ENCODE measurements at regions of chr19 and their contacts with region 1.

Region 1: DNA sequence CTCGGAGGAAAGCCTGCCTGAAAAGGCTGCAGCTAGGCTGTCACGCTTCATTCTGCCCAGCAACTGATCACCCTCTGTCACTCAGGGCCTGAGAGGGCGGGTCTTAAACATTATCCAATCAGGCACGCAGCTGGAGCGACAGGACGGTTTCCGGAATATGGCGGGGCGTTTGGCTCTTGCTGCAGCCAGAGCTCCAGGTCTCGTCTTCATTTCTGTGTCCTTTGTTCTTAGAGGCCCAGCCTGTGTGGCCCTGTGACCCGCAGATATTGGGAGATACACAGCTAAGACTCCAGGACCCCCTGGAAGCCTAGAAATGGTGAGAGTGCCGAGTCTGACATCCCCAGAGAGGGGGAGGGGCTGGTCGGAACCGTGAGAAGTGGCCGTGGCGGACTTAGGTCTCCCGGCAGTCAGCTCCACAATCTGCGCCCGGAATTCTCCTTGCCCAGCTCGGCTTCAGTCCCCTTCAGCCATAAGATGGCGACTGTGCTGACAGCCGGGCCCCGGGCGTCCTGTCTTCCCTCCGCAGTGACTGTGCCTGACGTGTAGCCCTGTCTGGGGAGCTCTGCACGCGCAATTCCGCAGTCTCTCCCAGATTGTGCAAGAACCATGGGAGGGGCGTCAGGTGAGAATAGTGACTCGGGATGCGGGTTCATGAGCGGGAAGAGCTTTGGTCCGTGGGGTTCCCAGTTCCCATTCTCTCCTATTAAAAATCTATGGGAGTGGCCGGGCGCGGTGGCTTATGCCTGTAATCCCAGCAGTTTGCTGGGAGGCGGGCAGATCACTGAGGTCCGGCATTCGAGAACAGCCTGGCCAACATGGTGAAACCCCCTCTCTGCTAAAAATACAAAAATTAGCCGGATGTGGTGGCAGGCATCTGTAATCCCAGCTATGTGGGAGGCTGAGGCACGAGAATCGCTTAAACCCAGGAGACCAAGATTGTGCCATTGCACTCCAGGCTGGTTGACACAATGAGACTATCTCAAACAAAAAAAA is at the start of gene ZNF429:
- DNase-seq: peak; percentile 85 to 88
- H3K4me3 ChIP-seq: peak within 1 kb of the TSS; percentile 78 to 95 (median 92)
- H3K27ac ChIP-seq: peak within 1 kb of the TSS; percentile 84
- H3K4me1 ChIP-seq: no peaks in the 10 kb centered on the region
- H3K27me3 ChIP-seq: no peaks in the 10 kb centered on the region
- CTCF ChIP-seq: peak in 1 of 3 experiments; percentile 11; a peak in 2 of 4 replicates
- EP300 ChIP-seq: no peak
- POLR2A ChIP-seq: peak; percentile 63 to 83
- RAD21 ChIP-seq: peak in 1 of 2 experiments; percentile 20; a peak in 3 of 4 replicates
- total RNA-seq, gene ZNF429: 15.0 and 15.4 TPM in 2 replicates

Region 2: GRCh38 chr19:21474671-21475181 is 31.0 kb before region 1 on chr19:
- CTCF ChIA-PET with region 1: no interaction called
- POLR2A ChIA-PET with region 1: interaction called, 10 read pairs
- DNase-seq: peak in 1 of 2 experiments; percentile 84
- H3K4me3 ChIP-seq: peak overlapping the region; percentile 35 to 69 (median 60)
- H3K27ac ChIP-seq: peak overlapping the region; percentile 94
- H3K4me1 ChIP-seq: no peaks in the 10 kb centered on the region; a peak in 1 of 7 replicates
- H3K27me3 ChIP-seq: no peaks in the 10 kb centered on the region; a peak in 1 of 7 replicates
- CTCF ChIP-seq: no peak
- EP300 ChIP-seq: no peak
- POLR2A ChIP-seq: peak; percentile 80 to 97
- RAD21 ChIP-seq: no peak

Region 3: DNA sequence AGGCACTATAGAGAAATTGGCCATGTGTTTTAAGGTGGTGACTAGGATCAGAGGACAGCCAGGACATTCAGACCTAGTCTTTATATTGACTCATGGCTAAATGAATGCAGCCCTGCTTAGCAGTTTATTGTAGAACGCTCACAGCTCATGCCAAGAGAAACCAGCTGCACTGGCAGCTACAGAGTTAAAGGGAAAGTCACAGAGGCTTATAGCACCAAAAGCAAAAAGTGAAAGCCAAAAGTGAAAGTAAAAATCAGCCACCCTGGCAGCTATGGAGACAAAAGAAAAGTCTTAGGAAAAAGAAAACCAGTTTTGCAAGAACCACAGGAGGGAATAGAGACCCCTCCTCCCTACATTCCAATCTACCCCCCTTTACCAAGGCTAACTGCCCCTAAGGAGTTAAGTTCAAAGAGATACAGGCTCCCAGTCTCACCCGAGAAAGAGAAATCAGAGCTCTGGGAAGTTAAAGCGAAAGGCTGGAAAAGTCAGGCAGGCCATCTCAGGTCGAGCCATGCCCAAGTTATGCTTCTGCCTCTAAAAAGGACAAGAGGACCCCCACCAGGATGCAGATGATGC is 98.7 kb after region 1 on chr19:
- CTCF ChIA-PET with region 1: no interaction called
- POLR2A ChIA-PET with region 1: interaction called, 12 read pairs
- DNase-seq: peak in 1 of 2 experiments; percentile 52
- H3K4me3 ChIP-seq: peak overlapping the region in 3 of 4 experiments; percentile 32 to 50 (median 39); a peak in 5 of 8 replicates
- H3K27ac ChIP-seq: peak overlapping the region; percentile 68
- H3K4me1 ChIP-seq: peaks cover 17 to 28% (median 23%) of the 10 kb centered on the region in 4 experiments
- H3K27me3 ChIP-seq: no peaks in the 10 kb centered on the region
- CTCF ChIP-seq: no peak
- EP300 ChIP-seq: peak in 1 of 2 experiments; percentile 80; a peak in 1 of 3 replicates
- POLR2A ChIP-seq: no peak
- RAD21 ChIP-seq: peak; percentile 5 to 25; a peak in 3 of 4 replicates

Region 4: DNA sequence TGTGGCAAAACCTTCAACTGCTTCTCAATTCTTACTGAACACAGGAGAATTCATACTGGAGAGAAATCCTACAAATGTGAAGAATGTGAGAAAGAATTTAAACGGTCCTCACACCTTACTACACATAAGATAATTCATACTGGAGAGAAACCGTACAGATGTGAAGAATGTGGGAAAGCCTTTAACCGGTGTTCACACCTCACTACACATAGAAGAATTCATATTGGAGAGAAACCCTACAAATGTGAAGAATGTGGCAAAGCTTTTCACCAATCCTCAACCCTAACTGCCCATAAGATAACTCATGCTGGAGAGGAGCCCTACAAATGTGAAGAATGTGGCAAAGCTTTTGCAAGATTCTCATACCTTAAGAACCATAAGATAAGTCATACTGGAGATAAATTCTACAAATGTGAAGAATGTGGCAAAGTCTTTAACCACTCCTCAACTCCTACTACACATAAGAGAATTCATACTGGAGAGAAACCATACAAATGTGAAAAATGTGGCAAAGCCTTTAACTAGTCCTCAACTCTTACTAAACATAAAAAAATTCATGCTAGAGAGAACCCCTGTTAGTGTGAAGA is 149.9 kb after region 1 on chr19:
- CTCF ChIA-PET with region 1: no interaction called
- POLR2A ChIA-PET with region 1: no interaction called
- DNase-seq: no peak
- H3K4me3 ChIP-seq: no peak overlapping the region
- H3K27ac ChIP-seq: no peak overlapping the region
- H3K4me1 ChIP-seq: no peaks in the 10 kb centered on the region
- H3K27me3 ChIP-seq: no peaks in the 10 kb centered on the region
- CTCF ChIP-seq: no peak
- EP300 ChIP-seq: no peak
- POLR2A ChIP-seq: no peak
- RAD21 ChIP-seq: no peak